ENCODE measurements at regions of chr7 and their contacts with region 1.

Region 1: GRCh38 chr7:115748131-115748738 is 282.3 kb downstream of the TFEC start:
- DNase-seq: peak; percentile 44
- ATAC-seq: peak; percentile 76
- H3K4me3 ChIP-seq: no peak overlapping the region
- H3K27ac ChIP-seq: no peak overlapping the region
- H3K4me1 ChIP-seq: no peaks in the 10 kb centered on the region
- H3K27me3 ChIP-seq: peaks cover 21% of the 10 kb centered on the region
- CTCF ChIP-seq: peak; percentile 69

Region 2: GRCh38 chr7:115379321-115379720 is 368.9 kb before region 1 on chr7:
- CTCF ChIA-PET with region 1: no interaction called
- POLR2A ChIA-PET with region 1: no interaction called
- intact Hi-C with region 1: loop called (anchors 10 kb)
- DNase-seq: no peak
- ATAC-seq: no peak
- H3K4me3 ChIP-seq: no peak overlapping the region
- H3K27ac ChIP-seq: no peak overlapping the region
- H3K4me1 ChIP-seq: no peaks in the 10 kb centered on the region
- H3K27me3 ChIP-seq: peaks cover 3% of the 10 kb centered on the region; the same call in 1 of the 2 replicates
- CTCF ChIP-seq: 0 out of 2 replicates have a peak, but pooled peaks have one; percentile 5

Region 3: GRCh38 chr7:115707258-115708012 is 40.8 kb before region 1 on chr7:
- CTCF ChIA-PET with region 1: no interaction called
- POLR2A ChIA-PET with region 1: no interaction called
- intact Hi-C with region 1: no loop called
- DNase-seq: peak; percentile 63
- ATAC-seq: peak; percentile 87
- H3K4me3 ChIP-seq: no peak overlapping the region
- H3K27ac ChIP-seq: no peak overlapping the region
- H3K4me1 ChIP-seq: no peaks in the 10 kb centered on the region
- H3K27me3 ChIP-seq: no peaks in the 10 kb centered on the region
- CTCF ChIP-seq: peak; percentile 73